CD8-positive, alpha-beta memory T cell (primary cell): ENCODE measurements at regions of chr17 and their contacts with region 1.

Region 1: DNA sequence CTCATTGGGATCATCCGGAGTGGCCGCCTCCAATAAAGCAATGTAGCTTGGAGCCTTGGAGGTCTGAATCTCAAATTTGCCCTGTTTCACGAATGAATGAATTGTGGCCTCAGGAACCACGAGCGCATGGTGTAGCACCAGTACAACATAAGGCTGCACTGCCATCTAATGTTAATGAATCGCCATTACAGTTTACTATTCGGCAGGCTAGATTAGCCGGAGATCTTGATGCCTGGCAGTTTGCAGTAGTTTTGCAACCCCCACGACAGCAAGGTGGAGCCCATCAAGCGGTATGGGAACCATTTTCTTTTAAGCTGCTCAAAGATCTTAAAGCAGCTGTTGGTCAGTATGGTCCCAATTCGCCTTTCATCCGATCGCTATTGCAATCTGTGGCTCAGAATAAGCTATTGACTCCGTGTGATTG is 18.8 kb downstream of the ALOX15B start:
- DNase-seq: peak; percentile 11 to 66 (median 63)
- H3K4me3 ChIP-seq: no peak overlapping the region
- H3K4me3 Mint-ChIP-seq: no peak overlapping the region
- H3K27ac ChIP-seq: no peak overlapping the region
- H3K27ac Mint-ChIP-seq: no peak overlapping the region
- H3K4me1 ChIP-seq: peaks cover 9% of the 10 kb centered on the region
- H3K4me1 Mint-ChIP-seq: peaks cover 12 to 22% (median 22%) of the 10 kb centered on the region in 3 donors
- H3K27me3 ChIP-seq: peaks cover 14% of the 10 kb centered on the region
- H3K27me3 Mint-ChIP-seq: peaks cover 21 to 50% of the 10 kb centered on the region in 2 donors

Region 2: GRCh38 chr17:7745748-7746470 is 311.8 kb before region 1 on chr17:
- CTCF ChIA-PET with region 1: interaction called, 11 read pairs
- POLR2A ChIA-PET with region 1: no interaction called
- DNase-seq: no peak
- H3K4me3 ChIP-seq: no peak overlapping the region
- H3K4me3 Mint-ChIP-seq: no peak overlapping the region
- H3K27ac ChIP-seq: no peak overlapping the region
- H3K27ac Mint-ChIP-seq: no peak overlapping the region
- H3K4me1 ChIP-seq: no peaks in the 10 kb centered on the region
- H3K4me1 Mint-ChIP-seq: no peaks in the 10 kb centered on the region
- H3K27me3 ChIP-seq: no peaks in the 10 kb centered on the region
- H3K27me3 Mint-ChIP-seq: peaks cover 9 to 19% of the 10 kb centered on the region in 2 donors

Region 3: GRCh38 chr17:8041249-8041928 is 16.3 kb before region 1 on chr17:
- CTCF ChIA-PET with region 1: interaction called, 13 read pairs
- POLR2A ChIA-PET with region 1: no interaction called
- DNase-seq: peak in 2 of 5 donors; percentile 32
- H3K4me3 ChIP-seq: no peak overlapping the region
- H3K4me3 Mint-ChIP-seq: no peak overlapping the region
- H3K27ac ChIP-seq: no peak overlapping the region
- H3K27ac Mint-ChIP-seq: no peak overlapping the region
- H3K4me1 ChIP-seq: no peaks in the 10 kb centered on the region
- H3K4me1 Mint-ChIP-seq: peaks cover 0 to 4% (median 0%) of the 10 kb centered on the region in 3 donors
- H3K27me3 ChIP-seq: no peaks in the 10 kb centered on the region
- H3K27me3 Mint-ChIP-seq: peaks cover 22 to 34% of the 10 kb centered on the region in 2 donors

Region 4: GRCh38 chr17:8073627-8074484 is 16.2 kb after region 1 on chr17:
- CTCF ChIA-PET with region 1: interaction called, 42 read pairs
- POLR2A ChIA-PET with region 1: interaction called, 3 read pairs
- DNase-seq: peak; percentile 70 to 85 (median 80)
- H3K4me3 ChIP-seq: peak overlapping the region; percentile 51
- H3K4me3 Mint-ChIP-seq: peak overlapping the region; percentile 16 to 86 (median 81)
- H3K27ac ChIP-seq: no peak overlapping the region
- H3K27ac Mint-ChIP-seq: peak overlapping the region in 5 of 8 donors; percentile 47 to 91 (median 78)
- H3K4me1 ChIP-seq: peaks cover 25% of the 10 kb centered on the region
- H3K4me1 Mint-ChIP-seq: peaks cover 16 to 25% (median 19%) of the 10 kb centered on the region in 3 donors
- H3K27me3 ChIP-seq: peaks cover 17% of the 10 kb centered on the region
- H3K27me3 Mint-ChIP-seq: peaks cover 36 to 47% of the 10 kb centered on the region in 2 donors

Region 5: GRCh38 chr17:8109661-8110464 is 52.2 kb after region 1 on chr17:
- CTCF ChIA-PET with region 1: interaction called, 35 read pairs
- POLR2A ChIA-PET with region 1: interaction called, 3 read pairs
- DNase-seq: peak; percentile 74 to 86 (median 76)
- H3K4me3 ChIP-seq: peak overlapping the region; percentile 65
- H3K4me3 Mint-ChIP-seq: peak overlapping the region in 5 of 7 donors; percentile 66 to 72 (median 69)
- H3K27ac ChIP-seq: no peak overlapping the region
- H3K27ac Mint-ChIP-seq: peak overlapping the region in 1 of 8 donors; percentile 23
- H3K4me1 ChIP-seq: no peaks in the 10 kb centered on the region
- H3K4me1 Mint-ChIP-seq: peaks cover 0 to 5% (median 2%) of the 10 kb centered on the region in 3 donors
- H3K27me3 ChIP-seq: peaks cover 27% of the 10 kb centered on the region
- H3K27me3 Mint-ChIP-seq: peaks cover 27 to 34% of the 10 kb centered on the region in 2 donors